ENCODE measurements at regions of chr1 and their contacts with region 1.

Region 1: GRCh38 chr1:27357281-27358037 is 9.3 kb downstream of the MAP3K6 start:
- DNase-seq: peak; percentile 73
- H3K4me3 Mint-ChIP-seq: peak overlapping the region; percentile 58
- H3K27ac Mint-ChIP-seq: peak overlapping the region; percentile 74
- H3K4me1 Mint-ChIP-seq: peaks cover 22% of the 10 kb centered on the region
- H3K27me3 Mint-ChIP-seq: no peaks in the 10 kb centered on the region

Region 2: DNA sequence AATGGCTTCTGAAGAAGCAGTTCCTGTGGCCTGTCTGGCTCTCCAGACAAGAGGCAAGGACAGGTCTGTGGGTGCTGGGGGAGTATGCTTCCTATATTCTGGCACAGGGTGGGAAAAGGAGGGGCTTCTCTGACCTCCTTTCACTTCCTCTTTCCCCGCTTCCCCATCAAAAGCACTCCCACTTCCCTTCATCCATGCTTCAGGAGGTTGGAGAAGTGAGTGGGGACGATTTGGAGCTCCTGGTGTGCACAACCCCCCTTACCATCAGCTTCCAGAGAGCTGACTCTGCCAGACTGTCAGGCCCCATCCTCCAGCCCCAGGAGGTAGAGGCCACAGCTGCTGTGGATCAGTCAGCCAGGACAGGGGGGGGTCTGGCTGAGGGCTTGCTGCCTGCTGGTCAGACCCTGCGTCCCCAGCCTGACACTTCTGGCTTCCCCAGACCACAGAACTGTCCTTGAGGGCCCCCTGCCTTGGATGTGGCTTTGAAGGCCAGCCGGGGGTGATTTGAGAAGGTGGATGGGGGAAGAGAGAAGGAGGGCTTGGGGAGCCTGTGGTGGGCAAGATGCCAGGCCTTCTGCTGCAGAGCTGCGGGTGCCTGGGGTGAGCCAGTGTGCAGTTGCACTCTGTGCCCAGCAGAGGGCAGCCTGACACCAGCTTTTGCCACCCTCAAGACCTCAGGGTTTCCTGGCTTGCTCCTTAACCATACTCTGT is 57.0 kb before region 1 on chr1:
- intact Hi-C with region 1: loop called (anchors 2 kb)
- DNase-seq: peak; percentile 61
- H3K4me3 Mint-ChIP-seq: no peak overlapping the region
- H3K27ac Mint-ChIP-seq: no peak overlapping the region
- H3K4me1 Mint-ChIP-seq: peaks cover 4% of the 10 kb centered on the region
- H3K27me3 Mint-ChIP-seq: no peaks in the 10 kb centered on the region

Region 3: GRCh38 chr1:27321813-27322577 is 35.5 kb before region 1 on chr1 and contains the start of gene TMEM222:
- intact Hi-C with region 1: loop called (anchors 1 kb)
- DNase-seq: peak; percentile 98
- H3K4me3 Mint-ChIP-seq: peak within 1 kb of the TSS; percentile 97
- H3K27ac Mint-ChIP-seq: peak within 1 kb of the TSS; percentile 90
- H3K4me1 Mint-ChIP-seq: peaks cover 33% of the 10 kb centered on the region
- H3K27me3 Mint-ChIP-seq: no peaks in the 10 kb centered on the region
- total RNA-seq, gene TMEM222: 44.3 and 47.4 TPM in 2 replicates

Region 4: GRCh38 chr1:27341525-27342252 is 15.8 kb before region 1 on chr1 and contains the start of gene SYTL1:
- intact Hi-C with region 1: loop called (anchors 1 kb)
- DNase-seq: peak; percentile 63
- H3K4me3 Mint-ChIP-seq: peak within 1 kb of the TSS; percentile 93
- H3K27ac Mint-ChIP-seq: peak within 1 kb of the TSS; percentile 99
- H3K4me1 Mint-ChIP-seq: peaks cover 59% of the 10 kb centered on the region
- H3K27me3 Mint-ChIP-seq: no peaks in the 10 kb centered on the region
- total RNA-seq, gene SYTL1: 24.4 and 26.3 TPM in 2 replicates

Region 5: DNA sequence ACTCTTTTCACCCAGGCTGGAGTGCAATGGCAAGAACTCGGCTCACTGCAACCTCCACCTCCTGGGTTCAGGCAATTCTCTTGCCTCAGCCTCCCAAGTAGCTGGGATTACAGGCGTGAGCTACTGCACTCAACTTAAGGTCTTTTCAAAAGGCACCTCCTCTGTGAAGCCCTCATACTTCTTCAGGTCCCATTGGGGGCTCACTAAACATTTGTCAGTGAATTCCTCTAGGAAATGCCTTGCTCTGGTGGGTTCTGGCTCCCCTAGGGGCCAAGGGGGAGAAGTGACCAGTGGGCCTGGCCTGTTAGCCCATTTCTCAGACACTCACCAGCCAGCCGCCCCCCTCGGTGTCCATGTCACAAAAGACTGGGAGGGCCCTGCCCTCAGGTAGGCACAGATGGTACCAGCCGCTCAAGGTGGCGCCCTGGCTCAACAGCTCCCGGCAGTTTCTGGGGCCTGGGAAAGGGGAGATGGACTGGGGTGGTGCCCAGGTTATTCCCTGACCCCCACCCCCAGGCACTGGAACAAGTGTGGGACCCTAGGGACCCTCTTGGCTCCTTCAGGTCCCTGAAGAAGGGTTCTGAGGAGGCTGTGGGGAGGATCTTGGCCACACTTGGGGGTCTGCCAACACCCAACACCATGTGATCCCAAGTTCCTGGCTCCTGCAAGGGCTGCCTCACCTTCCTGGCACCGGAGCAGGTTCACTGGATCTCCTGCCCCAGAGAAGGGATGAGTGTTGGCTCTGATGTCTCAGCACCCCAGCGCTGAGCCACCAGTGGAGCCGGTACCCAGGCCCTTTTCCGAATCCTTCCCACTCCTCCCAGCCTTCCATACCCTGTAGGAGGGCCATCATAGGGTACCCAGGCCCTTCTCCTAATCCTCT is 15.6 kb after region 1 on chr1:
- intact Hi-C with region 1: no loop called
- DNase-seq: no peak
- H3K4me3 Mint-ChIP-seq: no peak overlapping the region
- H3K27ac Mint-ChIP-seq: no peak overlapping the region
- H3K4me1 Mint-ChIP-seq: peaks cover 16% of the 10 kb centered on the region
- H3K27me3 Mint-ChIP-seq: no peaks in the 10 kb centered on the region